OCI-LY7 (cell line): ENCODE measurements at regions of chr12 and their contacts with region 1.

Region 1: DNA sequence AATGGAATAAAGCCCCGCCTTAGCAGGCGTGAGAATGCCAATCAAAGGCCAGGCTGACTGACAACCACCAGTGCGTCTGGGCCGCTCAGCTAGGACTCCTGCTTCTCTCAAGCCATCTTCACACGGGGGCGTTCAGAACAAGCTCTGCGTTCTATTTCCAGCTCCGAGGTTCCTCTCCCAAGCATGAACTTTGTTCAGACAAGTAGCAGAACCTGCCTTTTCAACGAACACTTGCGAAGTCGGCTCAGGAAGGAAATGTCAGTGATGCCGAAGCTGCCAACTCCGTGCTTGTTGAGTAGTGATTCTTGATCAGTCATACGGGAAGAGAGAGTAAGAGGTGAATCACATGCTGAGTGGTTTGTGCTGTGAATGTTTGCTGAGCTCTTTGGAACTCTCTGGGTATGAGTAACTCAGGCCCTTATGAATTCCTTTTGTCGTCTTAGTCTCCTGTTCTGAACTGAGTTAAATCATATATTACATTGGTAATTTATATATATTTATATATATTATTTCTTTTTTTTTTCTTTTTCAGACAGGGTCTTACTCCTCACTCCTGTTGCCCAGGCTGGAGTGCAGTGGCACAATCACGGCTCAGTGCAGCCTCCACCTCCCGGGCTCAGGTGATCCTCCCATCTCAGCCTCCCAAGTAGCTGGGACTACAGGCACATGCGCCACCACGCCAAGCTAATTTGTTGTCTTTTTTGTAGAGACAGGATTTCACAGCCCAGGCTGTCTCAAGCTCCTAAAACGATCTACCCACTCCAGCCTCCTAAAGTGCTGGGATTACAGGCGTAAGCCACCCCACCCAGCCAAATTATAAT is 29.4 kb upstream of the BCL7A start:
- DNase-seq: no peak
- H3K4me3 ChIP-seq: no peak overlapping the region
- H3K27ac ChIP-seq: peak overlapping the region; percentile 56
- H3K4me1 ChIP-seq: peaks cover 62% of the 10 kb centered on the region
- CTCF ChIP-seq: no peak

Region 2: GRCh38 chr12:122021822-122022526 is 29.7 kb after region 1 on chr12 and contains the start of gene BCL7A:
- CTCF ChIA-PET with region 1: no interaction called
- POLR2A ChIA-PET with region 1: interaction called, 12 read pairs
- intact Hi-C with region 1: no loop called
- DNase-seq: peak; percentile 83
- H3K4me3 ChIP-seq: peak within 1 kb of the TSS; percentile 95
- H3K27ac ChIP-seq: peak within 1 kb of the TSS; percentile 94
- H3K4me1 ChIP-seq: peaks cover 68% of the 10 kb centered on the region
- CTCF ChIP-seq: no peak
- total RNA-seq, gene BCL7A: 66.2 and 76.2 TPM in 2 replicates

Region 3: DNA sequence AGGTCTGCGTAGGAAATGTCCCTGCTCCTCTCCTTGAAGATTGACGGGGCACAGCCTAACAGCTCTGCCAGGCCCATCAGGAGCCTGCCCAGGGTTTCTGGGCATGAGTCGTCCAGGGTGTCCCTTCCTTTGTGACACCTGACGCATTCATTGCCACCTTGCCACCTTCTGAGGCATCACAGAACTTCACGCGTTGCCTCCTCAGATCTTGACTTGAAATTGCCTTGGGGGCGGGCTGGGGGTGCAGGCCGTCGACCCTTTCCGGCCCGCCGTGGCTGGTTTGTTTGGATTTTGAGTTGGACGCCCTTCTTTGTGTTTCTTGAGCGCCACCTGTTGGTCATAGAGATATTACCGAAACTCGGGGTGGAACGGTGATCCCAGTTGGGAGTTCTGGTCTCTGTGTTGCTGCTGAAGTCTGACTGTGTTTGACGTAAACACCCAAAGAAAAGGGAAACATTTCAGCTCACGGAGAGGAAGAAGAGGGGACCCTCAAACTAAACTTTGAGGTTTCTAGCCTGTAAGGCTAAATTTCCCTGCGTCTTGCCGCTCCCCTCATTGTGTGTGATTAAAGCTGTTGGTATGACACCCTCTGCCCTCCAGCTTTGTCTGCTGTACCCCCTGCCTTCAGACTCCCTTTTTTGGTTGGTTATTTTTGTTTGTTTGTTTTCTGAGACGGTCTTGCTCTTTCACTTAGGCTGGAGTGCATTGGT is 130.9 kb after region 1 on chr12:
- CTCF ChIA-PET with region 1: no interaction called
- POLR2A ChIA-PET with region 1: no interaction called
- intact Hi-C with region 1: no loop called
- DNase-seq: peak; percentile 78
- H3K4me3 ChIP-seq: no peak overlapping the region
- H3K27ac ChIP-seq: no peak overlapping the region
- H3K4me1 ChIP-seq: peaks cover 7% of the 10 kb centered on the region
- CTCF ChIP-seq: peak; percentile 94

Region 4: GRCh38 chr12:122293081-122293480 is 300.8 kb after region 1 on chr12:
- CTCF ChIA-PET with region 1: no interaction called
- POLR2A ChIA-PET with region 1: no interaction called
- intact Hi-C with region 1: no loop called
- DNase-seq: no peak
- H3K4me3 ChIP-seq: no peak overlapping the region
- H3K27ac ChIP-seq: no peak overlapping the region
- H3K4me1 ChIP-seq: no peaks in the 10 kb centered on the region
- CTCF ChIP-seq: no peak